Posterior vena cava (tissue), 2 donors: ENCODE measurements at regions of chr6 and their contacts with region 1.

Region 1: DNA sequence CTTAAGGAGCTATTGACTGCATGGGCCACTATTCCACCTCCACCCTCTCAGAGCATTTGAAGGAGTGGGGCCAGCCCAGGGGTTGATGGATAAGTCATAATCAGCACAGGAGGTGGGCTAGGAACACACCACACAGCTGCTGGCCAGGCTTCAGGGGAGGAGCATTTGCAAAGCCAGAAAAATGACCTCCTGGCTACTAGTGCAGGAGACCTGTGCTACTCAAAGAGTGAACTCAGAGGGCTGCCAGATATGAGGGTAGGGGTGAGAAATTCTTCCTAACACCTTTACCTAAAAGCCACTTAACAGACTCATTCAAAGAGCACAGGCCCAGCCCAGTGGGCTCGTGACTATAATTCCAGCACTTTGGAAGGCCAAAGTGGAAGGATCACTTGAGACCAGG is 210.8 kb downstream of the TBXT start:
- DNase-seq: no peak

Region 2: GRCh38 chr6:165049364-165049763 is 907.5 kb before region 1 on chr6:
- intact Hi-C with region 1: no loop called
- DNase-seq: no peak

Region 3: DNA sequence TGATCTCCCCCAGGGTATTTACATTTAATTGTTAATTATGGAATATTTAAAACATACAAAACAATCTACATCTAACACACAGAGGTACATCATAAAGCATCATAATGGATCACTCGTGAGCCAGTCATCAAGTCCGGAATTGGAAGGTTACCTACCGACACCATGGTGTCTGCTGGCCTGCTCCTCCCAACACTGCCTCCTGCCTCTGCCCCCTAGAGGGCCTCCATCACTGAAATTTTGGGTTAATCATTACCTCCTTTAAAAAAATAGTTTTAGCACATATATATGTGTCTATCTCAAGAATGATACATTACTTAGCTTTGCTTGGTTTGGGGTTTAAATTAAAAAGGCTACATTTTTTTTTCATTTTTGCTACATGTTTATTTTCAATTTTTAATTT is 179.2 kb before region 1 on chr6:
- intact Hi-C with region 1: no loop called
- DNase-seq: no peak

Region 4: GRCh38 chr6:165936096-165936495 is 20.8 kb before region 1 on chr6:
- intact Hi-C with region 1: loop called in 1 of 2 experiments (anchors 1 kb)
- DNase-seq: no peak